Dendritic cell treated with granulocyte-macrophage colony-stimulating factor and Interleukin-4, amounts not matched to agents 40 ng/mL and 50 ng/mL, for 4 days (primary cell): ENCODE measurements at regions of chr1 and their contacts with region 1.

Region 1: DNA sequence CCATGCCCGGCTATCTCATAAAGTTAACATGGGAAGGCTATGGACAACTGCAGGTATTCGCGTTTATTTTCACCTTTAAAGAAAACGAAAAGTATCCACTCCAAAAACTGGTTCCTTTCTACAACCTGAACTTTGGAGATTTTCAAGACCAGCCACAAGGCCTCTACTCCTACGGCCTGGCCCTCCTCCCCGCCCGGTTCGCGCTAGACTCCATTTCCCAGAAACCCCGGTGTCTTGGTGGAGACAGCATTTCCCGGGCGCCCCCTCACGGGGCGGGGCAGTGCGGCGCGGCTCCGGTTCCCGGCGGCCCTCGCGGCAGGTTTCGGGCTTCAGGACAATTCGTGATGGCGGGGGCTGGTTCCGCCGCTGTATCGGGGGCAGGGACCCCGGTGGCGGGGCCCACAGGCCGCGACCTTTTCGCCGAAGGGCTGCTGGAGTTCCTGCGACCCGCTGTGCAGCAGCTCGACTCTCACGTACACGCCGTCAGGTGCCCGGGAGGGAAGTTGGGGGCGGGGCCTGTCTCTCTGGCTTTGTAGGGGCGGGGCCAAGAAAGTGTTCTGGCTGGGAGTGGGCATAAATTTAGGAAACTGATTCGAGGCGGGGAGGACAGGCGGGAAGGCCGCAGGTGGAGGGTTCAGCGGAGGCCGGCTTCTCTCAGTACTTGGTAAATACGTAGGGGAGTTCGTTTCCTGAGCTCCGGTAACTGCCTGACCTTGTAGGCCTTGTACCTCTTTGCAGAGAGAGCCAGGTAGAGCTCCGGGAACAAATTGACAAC is at the start of gene SNAPIN:
- H3K4me3 Mint-ChIP-seq: peak within 1 kb of the TSS; percentile 95
- H3K27ac Mint-ChIP-seq: peak within 1 kb of the TSS; percentile 96
- H3K4me1 Mint-ChIP-seq: peaks cover 27% of the 10 kb centered on the region
- H3K27me3 Mint-ChIP-seq: no peaks in the 10 kb centered on the region

Region 2: DNA sequence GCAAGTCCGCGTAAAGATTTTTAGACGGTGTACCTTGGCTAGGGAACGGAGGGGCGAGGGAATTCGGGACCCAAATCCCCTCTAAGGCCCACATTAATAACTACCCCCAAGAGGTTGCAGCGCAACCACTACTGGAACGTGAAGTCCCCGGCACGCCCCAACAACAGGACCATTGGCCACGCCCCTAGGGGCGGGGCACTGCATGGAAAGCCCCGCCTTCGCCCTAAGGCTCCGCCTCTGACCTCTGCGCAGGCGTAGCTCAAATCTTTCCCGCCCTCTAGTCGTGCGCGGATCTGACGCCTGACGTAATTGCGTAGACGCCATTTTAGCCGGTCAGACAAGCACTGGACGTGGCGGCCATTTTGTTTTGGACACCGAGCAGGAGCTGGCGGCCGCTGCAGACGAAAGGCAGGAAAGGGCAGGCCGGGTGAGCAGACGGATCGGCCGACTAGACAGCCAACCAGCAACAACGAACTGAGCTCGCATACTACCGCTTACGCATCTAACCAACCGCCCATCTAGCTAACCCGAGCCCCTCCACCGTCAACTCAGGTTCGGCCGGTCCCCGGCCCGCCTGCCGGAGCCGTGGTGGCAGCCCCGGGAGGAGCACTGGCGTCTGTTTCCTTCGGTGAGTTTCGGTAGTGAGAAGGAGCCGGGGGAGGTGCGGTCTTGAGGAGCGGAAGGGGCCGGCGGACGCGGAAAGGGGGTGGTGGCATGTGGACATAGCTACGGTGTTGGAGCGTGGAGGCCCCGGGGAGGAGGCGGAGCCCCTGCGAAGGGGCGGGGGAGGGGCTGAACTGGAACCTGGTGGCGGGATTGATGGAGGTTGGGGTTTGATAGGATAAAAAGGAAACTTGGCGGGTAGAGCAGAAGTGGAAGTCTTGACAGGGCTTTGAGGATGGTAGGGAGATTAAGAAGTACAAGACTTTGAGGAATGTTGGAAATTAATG is 24.6 kb before region 1 on chr1 and contains the start of gene CHTOP:
- intact Hi-C with region 1: loop called (anchors 1 kb)
- H3K4me3 Mint-ChIP-seq: peak within 1 kb of the TSS; percentile 100
- H3K27ac Mint-ChIP-seq: peak within 1 kb of the TSS; percentile 98
- H3K4me1 Mint-ChIP-seq: peaks cover 59% of the 10 kb centered on the region
- H3K27me3 Mint-ChIP-seq: peaks cover 2% of the 10 kb centered on the region

Region 3: GRCh38 chr1:153928791-153929341 is 270.3 kb after region 1 on chr1:
- intact Hi-C with region 1: no loop called
- H3K4me3 Mint-ChIP-seq: no peak overlapping the region
- H3K27ac Mint-ChIP-seq: no peak overlapping the region
- H3K4me1 Mint-ChIP-seq: peaks cover 20% of the 10 kb centered on the region
- H3K27me3 Mint-ChIP-seq: no peaks in the 10 kb centered on the region